ENCODE measurements at regions of chr14 and their contacts with region 1.

Region 1: DNA sequence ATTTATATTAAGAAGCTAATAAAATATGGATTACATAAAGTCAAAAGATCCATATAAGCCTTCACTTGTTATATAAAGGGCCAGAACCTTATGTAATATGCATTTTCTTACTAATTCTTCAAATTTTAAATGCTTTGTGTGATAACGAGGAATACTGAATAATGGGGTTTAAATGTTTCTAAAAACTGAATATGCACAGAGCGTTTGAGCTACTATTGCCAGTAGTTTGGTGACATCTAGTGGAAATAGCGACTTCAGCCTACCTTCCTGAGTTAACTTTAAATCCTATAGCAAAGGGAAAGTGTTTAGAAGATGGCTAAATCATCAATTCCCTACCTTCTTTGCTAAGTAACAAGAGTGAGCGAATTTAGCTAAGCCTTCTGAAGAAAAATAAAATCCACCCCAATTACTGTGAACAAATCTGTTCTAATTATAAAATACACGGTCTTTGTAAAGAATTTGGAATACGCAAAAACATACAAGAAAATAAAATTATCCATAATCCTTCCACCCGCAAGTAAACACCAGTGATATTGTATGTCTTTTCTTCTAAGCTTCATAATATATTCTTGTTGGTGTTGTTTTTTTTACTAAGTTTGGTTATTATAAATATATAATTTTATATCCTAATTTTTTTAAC is 115.5 kb upstream of the G2E3 start:
- H3K4me3 ChIP-seq: no peak overlapping the region
- H3K27ac ChIP-seq: no peak overlapping the region
- H3K4me1 ChIP-seq: no peaks in the 10 kb centered on the region
- CTCF ChIP-seq: peak; percentile 69

Region 2: GRCh38 chr14:30270200-30271161 is 173.0 kb before region 1 on chr14:
- CTCF ChIA-PET with region 1: interaction called, 14 read pairs
- POLR2A ChIA-PET with region 1: no interaction called
- H3K4me3 ChIP-seq: peak overlapping the region; percentile 34
- H3K27ac ChIP-seq: no peak overlapping the region
- H3K4me1 ChIP-seq: no peaks in the 10 kb centered on the region
- CTCF ChIP-seq: peak; percentile 68; the same call in 1 of the 2 replicates

Region 3: DNA sequence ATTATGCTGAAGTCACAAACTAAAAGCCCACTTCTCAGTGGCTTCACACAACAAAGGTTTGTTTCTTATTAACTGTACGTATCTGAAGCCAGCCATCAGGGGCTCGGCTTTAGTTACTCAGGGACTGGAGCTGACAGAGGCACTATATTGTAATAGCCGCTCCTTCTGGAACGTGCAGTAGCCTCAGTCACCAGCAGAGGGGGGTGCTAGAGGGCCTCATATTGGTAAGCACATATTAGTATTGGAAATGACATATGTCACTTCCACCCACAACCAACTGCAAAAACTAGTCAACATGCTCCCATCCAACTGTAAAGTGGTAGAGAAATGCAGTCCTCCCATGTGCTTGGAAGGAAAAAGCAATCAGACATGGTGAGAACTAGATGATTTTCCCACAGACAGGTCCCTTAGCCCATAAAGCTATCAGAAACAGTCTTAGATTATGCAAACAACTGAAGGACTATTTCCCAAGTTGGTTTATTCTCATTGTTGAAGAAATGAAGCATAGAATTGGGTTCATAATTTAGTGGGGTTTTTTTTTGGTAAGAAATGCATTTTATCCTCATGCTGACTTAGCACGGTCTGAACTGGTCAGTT is 68.1 kb before region 1 on chr14:
- CTCF ChIA-PET with region 1: interaction called, 11 read pairs
- POLR2A ChIA-PET with region 1: no interaction called
- H3K4me3 ChIP-seq: no peak overlapping the region
- H3K27ac ChIP-seq: no peak overlapping the region
- H3K4me1 ChIP-seq: no peaks in the 10 kb centered on the region
- CTCF ChIP-seq: no peak

Region 4: GRCh38 chr14:30427401-30427800 is 16.1 kb before region 1 on chr14:
- CTCF ChIA-PET with region 1: interaction called, 12 read pairs
- POLR2A ChIA-PET with region 1: no interaction called
- H3K4me3 ChIP-seq: no peak overlapping the region
- H3K27ac ChIP-seq: no peak overlapping the region
- H3K4me1 ChIP-seq: no peaks in the 10 kb centered on the region
- CTCF ChIP-seq: no peak

Measured in HEK293 (cell line).